HEK293T (cell line): ENCODE measurements at regions of chr7 and their contacts with region 1.

Region 1: DNA sequence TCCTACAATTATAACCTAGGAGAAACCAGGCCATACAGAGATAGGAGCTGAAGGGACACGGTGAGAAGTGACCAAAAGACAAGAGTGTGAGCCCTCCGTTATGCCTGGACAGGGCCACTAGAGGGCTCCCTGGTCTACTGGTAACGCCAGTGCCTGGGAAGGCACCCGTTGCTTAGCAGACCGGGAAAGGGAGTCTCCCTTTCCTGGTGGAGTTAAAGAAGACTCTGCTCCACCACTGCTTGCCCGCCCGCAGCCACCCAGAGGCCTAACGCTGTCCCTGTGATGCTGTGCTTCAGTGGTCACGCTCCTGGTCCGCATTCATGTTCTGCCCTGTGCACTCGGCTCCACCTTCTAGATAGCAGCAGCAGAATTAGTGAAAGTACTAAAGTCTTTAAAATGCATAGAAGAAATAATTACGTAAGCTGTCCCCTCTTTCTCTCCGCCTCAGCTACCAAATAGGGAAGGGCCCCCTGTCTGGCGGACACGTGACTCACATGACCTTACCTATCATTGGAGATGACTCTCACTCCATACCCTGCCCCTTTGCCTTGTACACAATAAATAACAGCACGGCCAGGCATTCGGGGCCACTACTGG is 34.8 kb downstream of the GRID2IP start:
- DNase-seq: peak; percentile 73

Region 2: GRCh38 chr7:6476596-6477299 is 39.7 kb before region 1 on chr7:
- CTCF ChIA-PET with region 1: no interaction called
- POLR2A ChIA-PET with region 1: no interaction called
- DNase-seq: no peak

Region 3: GRCh38 chr7:6505685-6506574 is 10.6 kb before region 1 on chr7:
- CTCF ChIA-PET with region 1: no interaction called
- POLR2A ChIA-PET with region 1: no interaction called
- DNase-seq: no peak

Region 4: GRCh38 chr7:6558837-6559236 is 42.4 kb after region 1 on chr7:
- CTCF ChIA-PET with region 1: interaction called, 15 read pairs
- POLR2A ChIA-PET with region 1: no interaction called
- DNase-seq: peak; percentile 59

Region 5: DNA sequence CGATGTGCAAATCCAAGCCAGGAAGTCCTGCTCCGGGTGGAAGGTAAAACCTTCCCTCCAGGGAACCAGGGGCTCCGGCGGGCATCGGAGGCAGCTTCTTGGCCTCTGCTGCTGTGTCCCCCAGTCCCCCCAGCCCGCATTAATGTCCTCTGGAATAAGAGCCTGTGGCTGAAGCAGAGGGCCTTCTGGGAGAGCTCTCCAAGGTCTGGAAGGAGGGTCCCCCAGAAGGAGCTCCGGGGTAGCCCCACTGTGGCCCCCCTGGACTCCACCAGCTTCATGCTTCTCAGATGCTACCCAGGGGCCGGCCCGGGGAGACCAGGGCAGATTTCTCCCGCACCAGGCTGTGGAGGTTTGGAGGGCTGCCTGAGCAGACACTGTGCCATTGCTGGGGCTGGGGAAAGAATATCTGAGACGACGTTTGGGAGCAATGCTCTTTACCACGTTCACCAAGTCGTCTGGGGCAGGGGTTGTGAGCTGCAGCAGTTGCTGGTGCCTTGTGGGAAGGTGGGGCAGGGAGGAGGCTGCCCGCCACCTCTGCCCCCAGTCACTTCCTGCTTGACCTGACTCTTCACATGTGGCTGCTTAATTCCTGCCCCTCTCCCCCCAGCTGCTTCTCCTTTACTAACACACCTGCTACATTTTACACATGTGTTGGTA is 107.2 kb after region 1 on chr7:
- CTCF ChIA-PET with region 1: no interaction called
- POLR2A ChIA-PET with region 1: no interaction called
- DNase-seq: no peak